ENCODE measurements at regions of chr1 and their contacts with region 1.

Region 1: DNA sequence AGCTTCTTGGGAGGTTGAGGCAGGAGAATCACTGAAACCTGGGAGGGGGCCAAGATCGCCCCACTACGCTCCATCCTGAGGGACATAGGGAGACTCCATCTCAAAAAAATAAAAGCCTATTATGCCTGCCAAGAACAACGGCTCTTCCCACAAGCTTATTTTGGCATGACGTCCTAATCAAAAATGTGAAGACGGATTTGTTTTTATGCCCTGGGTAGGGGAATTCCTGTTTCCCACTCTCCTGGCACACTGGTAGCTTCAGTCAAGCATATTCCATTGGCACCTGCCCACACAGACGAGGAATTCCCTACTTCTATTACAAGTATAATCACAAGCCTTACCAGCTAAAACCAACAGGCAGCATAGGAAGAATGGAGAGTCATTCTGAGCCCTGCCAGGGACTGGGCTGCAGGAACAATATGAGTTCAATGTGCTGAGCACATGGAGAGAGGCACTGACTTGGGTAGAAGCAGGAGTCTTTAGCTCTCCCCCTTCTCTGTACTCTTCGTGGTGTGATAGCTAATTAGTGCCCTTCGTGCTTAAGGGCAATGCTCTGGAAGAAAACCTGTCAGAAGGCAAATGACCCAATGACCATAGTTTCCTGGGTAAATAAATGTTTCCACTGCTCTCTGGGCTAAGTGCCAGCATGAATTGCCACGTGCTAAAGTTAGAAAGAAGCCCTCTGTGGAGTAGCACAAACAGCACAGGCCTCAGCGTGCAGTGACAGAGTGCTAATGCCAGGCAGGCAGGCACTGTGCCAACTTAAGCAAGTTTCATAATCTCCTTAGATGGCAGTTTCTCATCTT is 16.8 kb downstream of the TNFSF4 start:
- DNase-seq: peak; percentile 87
- H3K4me3 Mint-ChIP-seq: peak overlapping the region; percentile 25
- H3K27ac Mint-ChIP-seq: peak overlapping the region; percentile 85
- H3K4me1 Mint-ChIP-seq: peaks cover 18% of the 10 kb centered on the region
- H3K27me3 Mint-ChIP-seq: no peaks in the 10 kb centered on the region
- CTCF ChIP-seq: no peak

Region 2: GRCh38 chr1:172745014-172745413 is 445.3 kb before region 1 on chr1:
- CTCF ChIA-PET with region 1: no interaction called
- intact Hi-C with region 1: no loop called
- DNase-seq: peak; percentile 64
- H3K4me3 Mint-ChIP-seq: peak overlapping the region; percentile 17
- H3K27ac Mint-ChIP-seq: peak overlapping the region; percentile 80
- H3K4me1 Mint-ChIP-seq: peaks cover 33% of the 10 kb centered on the region
- H3K27me3 Mint-ChIP-seq: no peaks in the 10 kb centered on the region
- CTCF ChIP-seq: peak; percentile 66

Region 3: GRCh38 chr1:173112129-173112528 is 78.2 kb before region 1 on chr1:
- CTCF ChIA-PET with region 1: no interaction called
- intact Hi-C with region 1: no loop called
- DNase-seq: no peak
- H3K4me3 Mint-ChIP-seq: no peak overlapping the region
- H3K27ac Mint-ChIP-seq: no peak overlapping the region
- H3K4me1 Mint-ChIP-seq: peaks cover 11% of the 10 kb centered on the region
- H3K27me3 Mint-ChIP-seq: no peaks in the 10 kb centered on the region
- CTCF ChIP-seq: no peak

Region 4: DNA sequence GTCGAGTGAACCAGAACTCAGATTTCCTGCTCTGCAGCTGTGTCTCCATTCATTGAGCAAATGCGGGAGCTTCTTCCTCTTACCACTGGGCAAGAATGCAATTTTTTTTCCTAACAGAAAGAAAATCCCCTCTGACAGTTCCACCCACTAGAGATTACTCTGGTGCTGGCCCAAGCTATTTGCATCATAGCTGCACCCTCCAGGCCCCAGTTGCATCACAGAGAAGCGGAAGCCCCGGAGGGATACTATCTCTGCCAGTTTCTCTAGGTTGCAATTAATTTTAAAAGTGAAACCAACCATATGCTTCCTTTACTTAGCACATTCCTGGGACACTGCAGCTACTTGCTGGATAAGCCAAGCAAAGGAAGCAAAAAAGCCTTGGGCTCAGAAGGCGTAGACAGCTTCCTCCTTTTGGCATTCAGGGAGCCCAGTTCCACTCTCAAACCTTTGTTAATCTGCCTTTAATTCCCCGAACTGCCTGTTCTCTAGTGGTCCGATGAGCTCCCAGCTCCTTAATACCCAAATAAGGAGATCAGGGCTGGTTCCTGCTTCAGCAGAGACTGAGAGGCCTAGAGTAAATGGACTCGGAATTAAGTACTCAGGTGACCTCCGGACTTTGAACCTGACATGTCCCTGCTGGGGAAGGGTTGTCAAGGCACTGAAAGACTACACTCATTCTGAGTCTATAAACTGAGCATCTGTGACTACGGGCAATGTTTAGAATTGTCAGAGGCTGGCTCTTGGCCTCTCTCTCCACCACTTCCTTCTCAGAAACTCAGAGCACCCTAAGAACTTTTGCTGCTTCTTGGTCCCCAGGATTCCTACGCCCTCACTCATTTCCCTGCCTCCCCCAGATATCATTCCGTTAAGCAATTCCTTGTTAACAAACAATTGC is 67.1 kb before region 1 on chr1:
- CTCF ChIA-PET with region 1: no interaction called
- intact Hi-C with region 1: loop called (anchors 1 kb)
- DNase-seq: peak; percentile 55
- H3K4me3 Mint-ChIP-seq: peak overlapping the region; percentile 65
- H3K27ac Mint-ChIP-seq: peak overlapping the region; percentile 88
- H3K4me1 Mint-ChIP-seq: peaks cover 50% of the 10 kb centered on the region
- H3K27me3 Mint-ChIP-seq: no peaks in the 10 kb centered on the region
- CTCF ChIP-seq: no peak